B cell (primary cell): ENCODE measurements at regions of chr1 and their contacts with region 1.

Region 1: GRCh38 chr1:220776720-220777326 is 9.9 kb upstream of the MTARC1 start:
- DNase-seq: peak; percentile 80
- ATAC-seq: peak; percentile 92
- H3K4me3 ChIP-seq: no peak overlapping the region
- H3K4me3 Mint-ChIP-seq: no peak overlapping the region
- H3K27ac ChIP-seq: no peak overlapping the region
- H3K27ac Mint-ChIP-seq: no peak overlapping the region
- H3K4me1 ChIP-seq: no peaks in the 10 kb centered on the region
- H3K4me1 Mint-ChIP-seq: peaks cover 24% of the 10 kb centered on the region
- H3K27me3 ChIP-seq: peaks cover 0 to 2% (median 0%) of the 10 kb centered on the region in 4 experiments
- H3K27me3 Mint-ChIP-seq: no peaks in the 10 kb centered on the region
- CTCF ChIP-seq: peak; percentile 98

Region 2: DNA sequence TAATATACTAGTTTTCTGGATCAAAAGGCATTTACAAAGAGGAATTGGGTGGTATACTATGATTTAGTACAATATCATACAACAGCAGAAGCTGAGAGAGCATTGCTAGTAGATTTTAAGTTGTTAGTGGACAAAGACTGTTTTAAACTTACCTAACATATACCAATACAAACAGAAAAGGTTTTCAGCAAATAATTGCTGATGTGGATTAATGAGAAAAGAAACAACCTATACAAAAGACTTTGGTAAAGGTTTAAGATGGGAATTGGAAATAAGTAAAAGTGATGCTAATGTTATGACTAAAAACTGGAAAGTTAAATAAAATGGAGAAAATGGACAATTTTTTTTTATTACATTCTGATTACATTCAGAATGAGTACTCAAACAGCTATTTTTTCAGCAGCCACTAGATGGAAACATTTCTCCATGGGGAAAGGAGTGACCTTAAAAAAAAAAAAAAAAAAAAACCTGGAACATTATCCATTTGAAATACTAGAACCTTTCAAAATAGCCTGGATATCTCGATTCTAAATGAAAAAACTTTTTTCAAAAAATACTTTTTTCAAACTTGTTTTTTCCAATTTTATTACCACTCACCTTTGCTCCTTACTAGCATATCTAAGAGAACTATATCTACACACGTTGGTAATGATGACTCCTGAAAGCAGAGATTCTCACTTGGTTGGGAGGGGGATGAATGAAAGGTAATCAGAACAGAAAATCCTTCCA is 785.9 kb before region 1 on chr1:
- CTCF ChIA-PET with region 1: no interaction called
- POLR2A ChIA-PET with region 1: no interaction called
- intact Hi-C with region 1: loop called (anchors 5 kb)
- DNase-seq: peak; percentile 24
- ATAC-seq: no peak
- H3K4me3 ChIP-seq: no peak overlapping the region
- H3K4me3 Mint-ChIP-seq: no peak overlapping the region
- H3K27ac ChIP-seq: no peak overlapping the region
- H3K27ac Mint-ChIP-seq: no peak overlapping the region
- H3K4me1 ChIP-seq: peaks cover 4% of the 10 kb centered on the region in 2 donors
- H3K4me1 Mint-ChIP-seq: peaks cover 40% of the 10 kb centered on the region
- H3K27me3 ChIP-seq: no peaks in the 10 kb centered on the region
- H3K27me3 Mint-ChIP-seq: no peaks in the 10 kb centered on the region
- CTCF ChIP-seq: peak; percentile 72

Region 3: DNA sequence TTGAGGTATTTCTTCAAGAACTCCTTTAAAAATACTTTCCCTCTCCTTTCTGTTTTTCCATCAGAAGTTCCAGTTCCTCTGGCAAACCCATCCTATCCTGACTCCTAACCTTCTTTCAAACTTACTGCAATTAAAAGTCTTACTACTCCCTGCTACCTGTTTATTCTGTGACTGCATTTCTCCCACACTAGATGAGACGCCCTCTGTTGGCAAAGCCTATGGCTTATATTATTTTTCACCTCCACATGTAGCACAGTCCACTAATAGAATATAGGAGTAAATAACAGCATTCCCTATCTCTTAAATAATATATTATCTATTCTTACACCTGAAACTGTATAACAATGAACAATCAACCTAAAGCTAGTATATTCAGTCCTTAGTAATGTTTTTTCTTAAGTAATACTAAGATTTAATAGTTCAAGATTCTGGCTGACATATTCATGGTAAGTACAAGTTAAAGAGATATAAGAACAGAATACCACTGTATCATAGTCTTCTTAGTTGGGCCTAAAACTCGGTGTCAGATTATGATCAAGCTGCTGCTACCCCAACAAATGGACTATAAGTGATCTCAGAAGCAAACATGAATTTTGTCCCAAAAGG is 559.3 kb before region 1 on chr1:
- CTCF ChIA-PET with region 1: interaction called, 32 read pairs
- POLR2A ChIA-PET with region 1: no interaction called
- intact Hi-C with region 1: loop called (anchors 1 kb)
- DNase-seq: peak; percentile 29
- ATAC-seq: no peak
- H3K4me3 ChIP-seq: no peak overlapping the region
- H3K4me3 Mint-ChIP-seq: no peak overlapping the region
- H3K27ac ChIP-seq: no peak overlapping the region
- H3K27ac Mint-ChIP-seq: peak overlapping the region; percentile 3
- H3K4me1 ChIP-seq: peaks cover 18 to 31% of the 10 kb centered on the region in 2 donors
- H3K4me1 Mint-ChIP-seq: peaks cover 48% of the 10 kb centered on the region
- H3K27me3 ChIP-seq: no peaks in the 10 kb centered on the region
- H3K27me3 Mint-ChIP-seq: no peaks in the 10 kb centered on the region
- CTCF ChIP-seq: peak; percentile 61

Region 4: DNA sequence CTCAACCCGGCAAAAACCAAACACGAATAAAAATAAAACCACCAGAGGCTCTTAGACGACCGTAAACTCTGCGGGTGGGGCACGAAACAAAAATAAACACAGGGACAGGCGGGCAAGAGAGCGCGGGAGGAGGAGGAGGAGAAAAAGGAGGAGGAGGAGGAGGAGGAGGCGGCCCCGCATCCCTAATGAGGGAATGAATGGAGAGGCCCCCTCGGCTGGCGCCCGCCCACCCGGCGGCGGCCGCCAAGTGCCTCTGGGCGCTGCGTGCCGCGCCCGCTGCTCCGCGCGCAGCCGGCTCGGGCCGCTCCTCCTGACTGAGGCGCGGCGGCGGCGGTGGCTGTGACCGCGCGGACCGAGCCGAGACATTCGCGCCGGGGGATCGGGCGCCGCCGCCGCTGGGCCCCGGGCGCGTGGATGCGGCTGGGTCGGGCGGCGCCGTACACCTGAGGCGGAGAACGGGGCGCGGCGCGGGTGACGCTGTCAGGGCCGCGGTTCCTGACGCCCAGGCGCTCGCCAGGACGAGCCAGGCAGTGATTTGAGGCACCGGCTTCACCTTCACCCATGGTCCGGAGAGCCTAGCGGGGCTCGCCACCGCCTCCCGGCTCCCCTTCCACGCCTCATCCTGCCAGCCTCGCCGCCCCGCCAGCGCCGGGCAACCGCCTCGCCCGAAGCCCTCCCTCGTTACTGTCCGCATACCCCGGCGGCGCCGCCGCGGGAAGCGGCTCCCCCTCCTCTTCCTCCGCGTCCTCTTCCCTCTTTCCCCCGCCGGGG is 248.7 kb before region 1 on chr1 and contains the start of gene MARK1:
- CTCF ChIA-PET with region 1: no interaction called
- POLR2A ChIA-PET with region 1: no interaction called
- intact Hi-C with region 1: loop called (anchors 5 kb)
- DNase-seq: peak; percentile 55
- ATAC-seq: peak; percentile 64
- H3K4me3 ChIP-seq: peak within 1 kb of the TSS in 4 of 5 experiments; percentile 39 to 70 (median 56)
- H3K4me3 Mint-ChIP-seq: peak within 1 kb of the TSS; percentile 90
- H3K27ac ChIP-seq: peak within 1 kb of the TSS in 1 of 2 donors; percentile 48
- H3K27ac Mint-ChIP-seq: peak within 1 kb of the TSS; percentile 77
- H3K4me1 ChIP-seq: peaks cover 17 to 21% of the 10 kb centered on the region in 2 donors
- H3K4me1 Mint-ChIP-seq: peaks cover 23% of the 10 kb centered on the region
- H3K27me3 ChIP-seq: peaks cover 0 to 53% (median 28%) of the 10 kb centered on the region in 4 experiments
- H3K27me3 Mint-ChIP-seq: peaks cover 46% of the 10 kb centered on the region
- CTCF ChIP-seq: no peak
- total RNA-seq, gene MARK1: 3.8 and 3.9 TPM in 2 replicates

Region 5: GRCh38 chr1:220690140-220691025 is 86.4 kb before region 1 on chr1 and contains the start of gene C1orf115:
- CTCF ChIA-PET with region 1: interaction called, 22 read pairs
- POLR2A ChIA-PET with region 1: no interaction called
- intact Hi-C with region 1: loop called (anchors 1 kb)
- DNase-seq: peak; percentile 89
- ATAC-seq: peak; percentile 98
- H3K4me3 ChIP-seq: peak within 1 kb of the TSS in 4 of 5 experiments; percentile 47 to 83 (median 70)
- H3K4me3 Mint-ChIP-seq: peak within 1 kb of the TSS; percentile 93
- H3K27ac ChIP-seq: peak within 1 kb of the TSS in 1 of 2 donors; percentile 49
- H3K27ac Mint-ChIP-seq: peak within 1 kb of the TSS; percentile 87
- H3K4me1 ChIP-seq: peaks cover 14 to 19% of the 10 kb centered on the region in 2 donors
- H3K4me1 Mint-ChIP-seq: peaks cover 21% of the 10 kb centered on the region
- H3K27me3 ChIP-seq: peaks cover 0 to 4% (median 0%) of the 10 kb centered on the region in 4 experiments
- H3K27me3 Mint-ChIP-seq: peaks cover 3% of the 10 kb centered on the region
- CTCF ChIP-seq: peak; percentile 99
- total RNA-seq, gene C1orf115: 19.5 and 21.4 TPM in 2 replicates

Region 6: GRCh38 chr1:220748089-220748934 is 28.5 kb before region 1 on chr1 and contains the start of gene MTARC2:
- CTCF ChIA-PET with region 1: interaction called, 25 read pairs
- POLR2A ChIA-PET with region 1: interaction called, 3 read pairs
- intact Hi-C with region 1: no loop called
- DNase-seq: peak; percentile 52
- ATAC-seq: peak; percentile 93
- H3K4me3 ChIP-seq: peak within 1 kb of the TSS in 4 of 5 experiments; percentile 42 to 65 (median 58)
- H3K4me3 Mint-ChIP-seq: peak within 1 kb of the TSS; percentile 92
- H3K27ac ChIP-seq: no peak within 1 kb of the TSS
- H3K27ac Mint-ChIP-seq: peak within 1 kb of the TSS; percentile 59
- H3K4me1 ChIP-seq: peaks cover 16 to 20% of the 10 kb centered on the region in 2 donors
- H3K4me1 Mint-ChIP-seq: peaks cover 24% of the 10 kb centered on the region
- H3K27me3 ChIP-seq: peaks cover 0 to 36% (median 11%) of the 10 kb centered on the region in 4 experiments
- H3K27me3 Mint-ChIP-seq: peaks cover 40% of the 10 kb centered on the region
- CTCF ChIP-seq: no peak
- total RNA-seq, gene MTARC2: 17.2 and 22.6 TPM in 2 replicates